Activated B cell treated with CpG ODN at 0.5 μM for 24 hours (primary cell): ENCODE measurements at regions of chr3 and their contacts with region 1.

Region 1: GRCh38 chr3:49093853-49094767 is at the start of gene QRICH1:
- DNase-seq: peak; percentile 95
- ATAC-seq: peak; percentile 78
- H3K4me3 Mint-ChIP-seq: peak within 1 kb of the TSS; percentile 97
- H3K27ac Mint-ChIP-seq: peak within 1 kb of the TSS; percentile 97
- H3K4me1 Mint-ChIP-seq: peaks cover 46% of the 10 kb centered on the region
- H3K27me3 Mint-ChIP-seq: no peaks in the 10 kb centered on the region
- CTCF ChIP-seq: no peak
- total RNA-seq, gene QRICH1: 142 and 155 TPM in 2 replicates

Region 2: GRCh38 chr3:48088749-48089466 is 1005.2 kb before region 1 on chr3:
- CTCF ChIA-PET with region 1: no interaction called
- POLR2A ChIA-PET with region 1: interaction called, 4 read pairs
- intact Hi-C with region 1: loop called (anchors 5 kb)
- DNase-seq: peak; percentile 95
- ATAC-seq: peak; percentile 92
- H3K4me3 Mint-ChIP-seq: peak overlapping the region; percentile 97
- H3K27ac Mint-ChIP-seq: peak overlapping the region; percentile 97
- H3K4me1 Mint-ChIP-seq: peaks cover 29% of the 10 kb centered on the region
- H3K27me3 Mint-ChIP-seq: no peaks in the 10 kb centered on the region
- CTCF ChIP-seq: no peak

Region 3: GRCh38 chr3:48215466-48215865 is 878.6 kb before region 1 on chr3:
- CTCF ChIA-PET with region 1: no interaction called
- POLR2A ChIA-PET with region 1: no interaction called
- intact Hi-C with region 1: no loop called
- DNase-seq: no peak
- ATAC-seq: no peak
- H3K4me3 Mint-ChIP-seq: no peak overlapping the region
- H3K27ac Mint-ChIP-seq: no peak overlapping the region
- H3K4me1 Mint-ChIP-seq: no peaks in the 10 kb centered on the region
- H3K27me3 Mint-ChIP-seq: no peaks in the 10 kb centered on the region
- CTCF ChIP-seq: no peak

Region 4: GRCh38 chr3:48847504-48848423 is 246.3 kb before region 1 on chr3 and contains the start of gene PRKAR2A:
- CTCF ChIA-PET with region 1: no interaction called
- POLR2A ChIA-PET with region 1: no interaction called
- intact Hi-C with region 1: loop called (anchors 2 kb)
- DNase-seq: peak; percentile 88
- ATAC-seq: peak; percentile 92
- H3K4me3 Mint-ChIP-seq: peak within 1 kb of the TSS; percentile 89
- H3K27ac Mint-ChIP-seq: peak within 1 kb of the TSS; percentile 94
- H3K4me1 Mint-ChIP-seq: peaks cover 30% of the 10 kb centered on the region
- H3K27me3 Mint-ChIP-seq: no peaks in the 10 kb centered on the region
- CTCF ChIP-seq: no peak
- total RNA-seq, gene PRKAR2A: 27.4 and 28.0 TPM in 2 replicates

Region 5: GRCh38 chr3:48980295-48980694 is 113.8 kb before region 1 on chr3:
- CTCF ChIA-PET with region 1: no interaction called
- POLR2A ChIA-PET with region 1: no interaction called
- intact Hi-C with region 1: no loop called
- DNase-seq: no peak
- ATAC-seq: no peak
- H3K4me3 Mint-ChIP-seq: no peak overlapping the region
- H3K27ac Mint-ChIP-seq: no peak overlapping the region
- H3K4me1 Mint-ChIP-seq: no peaks in the 10 kb centered on the region
- H3K27me3 Mint-ChIP-seq: no peaks in the 10 kb centered on the region
- CTCF ChIP-seq: no peak

Region 6: GRCh38 chr3:49021813-49022687 is 72.1 kb before region 1 on chr3 and contains the start of gene NDUFAF3:
- CTCF ChIA-PET with region 1: interaction called, 8 read pairs
- POLR2A ChIA-PET with region 1: interaction called, 76 read pairs
- intact Hi-C with region 1: loop called (anchors 1 kb)
- DNase-seq: peak; percentile 94
- ATAC-seq: peak; percentile 67
- H3K4me3 Mint-ChIP-seq: peak within 1 kb of the TSS; percentile 94
- H3K27ac Mint-ChIP-seq: peak within 1 kb of the TSS; percentile 97
- H3K4me1 Mint-ChIP-seq: peaks cover 66% of the 10 kb centered on the region
- H3K27me3 Mint-ChIP-seq: no peaks in the 10 kb centered on the region
- CTCF ChIP-seq: peak; percentile 39
- total RNA-seq, gene NDUFAF3: 86.3 and 86.5 TPM in 2 replicates

Region 7: DNA sequence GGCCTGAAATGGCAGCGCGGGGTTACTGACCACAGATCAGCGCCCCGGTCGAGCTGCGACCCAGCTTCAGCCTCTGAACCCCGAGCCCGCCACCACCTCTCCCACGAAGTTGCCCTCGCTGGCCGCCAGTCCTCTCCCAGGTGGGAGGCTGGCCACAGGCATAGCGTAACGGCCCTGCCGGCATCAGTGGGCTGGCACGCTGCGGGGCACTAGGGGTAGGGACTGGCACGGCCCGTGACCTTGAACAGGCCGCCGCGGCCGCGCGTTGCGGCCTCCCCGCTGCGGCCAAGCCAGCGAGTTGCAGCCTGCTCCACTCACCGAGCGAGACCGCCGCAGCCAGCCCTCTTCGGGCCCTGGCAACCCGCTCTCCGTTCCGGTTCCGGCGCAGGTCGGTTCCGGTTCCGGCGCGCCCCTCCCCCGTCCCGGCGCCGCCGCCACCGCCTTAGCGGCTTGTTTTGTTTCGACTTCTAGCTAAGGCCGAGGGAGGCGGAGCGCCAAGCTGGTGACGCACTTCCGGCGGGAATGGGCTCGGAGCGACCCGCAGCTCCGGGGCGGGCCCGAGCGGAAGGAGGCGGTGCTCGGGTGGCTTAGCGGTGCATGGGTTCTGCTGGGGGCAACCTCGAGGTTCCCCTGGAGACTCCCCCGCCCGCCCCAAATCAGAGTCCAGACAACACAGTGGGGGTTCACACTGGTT is 26.5 kb after region 1 on chr3 and contains the start of gene USP19:
- CTCF ChIA-PET with region 1: interaction called, 3 read pairs
- POLR2A ChIA-PET with region 1: interaction called, 76 read pairs
- intact Hi-C with region 1: loop called (anchors 1 kb)
- DNase-seq: peak; percentile 95
- ATAC-seq: peak; percentile 93
- H3K4me3 Mint-ChIP-seq: peak within 1 kb of the TSS; percentile 84
- H3K27ac Mint-ChIP-seq: peak within 1 kb of the TSS; percentile 79
- H3K4me1 Mint-ChIP-seq: peaks cover 17% of the 10 kb centered on the region
- H3K27me3 Mint-ChIP-seq: no peaks in the 10 kb centered on the region
- CTCF ChIP-seq: no peak
- total RNA-seq, gene USP19: 62.0 and 75.3 TPM in 2 replicates

Region 8: GRCh38 chr3:49339945-49340800 is 246.1 kb after region 1 on chr3 and contains the start of gene USP4:
- CTCF ChIA-PET with region 1: interaction called, 3 read pairs
- POLR2A ChIA-PET with region 1: interaction called, 11 read pairs
- intact Hi-C with region 1: loop called (anchors 1 kb)
- DNase-seq: peak; percentile 88
- ATAC-seq: peak; percentile 84
- H3K4me3 Mint-ChIP-seq: peak within 1 kb of the TSS; percentile 95
- H3K27ac Mint-ChIP-seq: peak within 1 kb of the TSS; percentile 99
- H3K4me1 Mint-ChIP-seq: peaks cover 64% of the 10 kb centered on the region
- H3K27me3 Mint-ChIP-seq: no peaks in the 10 kb centered on the region
- CTCF ChIP-seq: no peak
- total RNA-seq, gene USP4: 86.7 and 115 TPM in 2 replicates

Region 9: DNA sequence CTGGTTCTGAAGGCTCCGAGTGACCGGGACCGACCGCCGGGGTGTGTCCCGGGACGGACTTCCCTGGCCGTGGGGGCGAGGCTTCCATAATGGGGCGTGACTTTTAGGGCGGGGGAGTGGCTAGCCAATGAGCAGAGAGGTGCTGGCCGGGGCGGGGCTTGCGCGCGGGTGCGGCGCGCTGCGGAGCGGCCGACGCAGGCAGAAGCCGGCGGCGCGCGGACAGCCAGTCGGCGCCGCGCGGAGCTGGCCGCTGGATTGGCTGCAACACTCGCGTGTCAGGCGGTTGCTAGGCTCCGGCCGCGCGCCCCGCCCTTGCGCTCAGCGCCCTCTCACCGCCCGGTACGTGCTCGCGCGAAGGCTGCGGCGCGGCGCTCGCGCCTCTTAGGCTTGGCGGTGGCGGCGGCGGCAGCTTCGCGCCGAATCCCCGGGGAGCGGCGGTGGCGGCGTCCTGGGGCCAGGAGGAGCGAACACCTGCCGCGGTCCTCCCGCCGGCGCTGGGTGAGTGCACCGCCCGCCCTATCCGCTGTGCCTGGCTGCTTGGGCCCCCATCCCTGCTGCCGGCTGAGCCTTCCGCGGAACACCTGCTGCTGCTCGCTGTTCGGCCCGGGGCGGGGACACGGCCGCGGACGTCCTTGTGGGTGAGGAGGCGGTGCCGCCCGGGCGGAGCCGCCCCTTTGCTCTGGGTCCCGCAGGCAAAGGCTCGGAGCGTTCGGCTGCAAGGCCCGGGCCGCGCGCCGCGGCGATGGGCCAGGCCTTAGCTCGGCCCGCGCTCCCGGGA is 376.0 kb after region 1 on chr3 and contains the start of gene DAG1:
- CTCF ChIA-PET with region 1: no interaction called
- POLR2A ChIA-PET with region 1: interaction called, 17 read pairs
- intact Hi-C with region 1: loop called (anchors 1 kb)
- DNase-seq: peak; percentile 97
- ATAC-seq: peak; percentile 87
- H3K4me3 Mint-ChIP-seq: peak within 1 kb of the TSS; percentile 91
- H3K27ac Mint-ChIP-seq: peak within 1 kb of the TSS; percentile 96
- H3K4me1 Mint-ChIP-seq: peaks cover 26% of the 10 kb centered on the region
- H3K27me3 Mint-ChIP-seq: no peaks in the 10 kb centered on the region
- CTCF ChIP-seq: no peak
- total RNA-seq, gene DAG1: 18.5 and 19.7 TPM in 2 replicates